Head of caudate nucleus (tissue), 42 donors: ENCODE measurements at regions of chr15 and their contacts with region 1.

Region 1: DNA sequence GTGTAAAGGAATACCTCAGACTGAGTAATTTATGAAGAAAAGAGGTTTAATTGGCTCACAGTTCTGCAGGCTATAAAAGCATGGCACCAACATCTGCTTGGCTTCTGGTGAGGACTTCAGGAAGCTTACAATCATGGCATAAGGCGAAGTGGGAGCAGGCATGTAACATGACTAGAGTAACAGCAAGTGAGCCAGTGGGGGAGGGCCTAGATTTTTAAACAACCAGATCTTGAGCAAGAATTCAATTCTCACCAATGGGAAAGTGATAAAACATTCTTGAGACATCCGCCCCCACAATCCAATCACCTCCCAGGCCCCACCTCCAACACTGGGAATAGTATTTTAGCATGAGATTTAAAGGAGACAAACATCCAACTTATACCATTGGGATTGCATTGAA is 44.2 kb upstream of the BCL2A1 start:
- DNase-seq: peak in 1 of 42 donors; percentile 25

Region 2: GRCh38 chr15:80100247-80100646 is 85.1 kb after region 1 on chr15:
- intact Hi-C with region 1: loop called (anchors 5 kb)
- DNase-seq: no peak